ENCODE measurements at regions of chr2 and their contacts with region 1.

Region 1: DNA sequence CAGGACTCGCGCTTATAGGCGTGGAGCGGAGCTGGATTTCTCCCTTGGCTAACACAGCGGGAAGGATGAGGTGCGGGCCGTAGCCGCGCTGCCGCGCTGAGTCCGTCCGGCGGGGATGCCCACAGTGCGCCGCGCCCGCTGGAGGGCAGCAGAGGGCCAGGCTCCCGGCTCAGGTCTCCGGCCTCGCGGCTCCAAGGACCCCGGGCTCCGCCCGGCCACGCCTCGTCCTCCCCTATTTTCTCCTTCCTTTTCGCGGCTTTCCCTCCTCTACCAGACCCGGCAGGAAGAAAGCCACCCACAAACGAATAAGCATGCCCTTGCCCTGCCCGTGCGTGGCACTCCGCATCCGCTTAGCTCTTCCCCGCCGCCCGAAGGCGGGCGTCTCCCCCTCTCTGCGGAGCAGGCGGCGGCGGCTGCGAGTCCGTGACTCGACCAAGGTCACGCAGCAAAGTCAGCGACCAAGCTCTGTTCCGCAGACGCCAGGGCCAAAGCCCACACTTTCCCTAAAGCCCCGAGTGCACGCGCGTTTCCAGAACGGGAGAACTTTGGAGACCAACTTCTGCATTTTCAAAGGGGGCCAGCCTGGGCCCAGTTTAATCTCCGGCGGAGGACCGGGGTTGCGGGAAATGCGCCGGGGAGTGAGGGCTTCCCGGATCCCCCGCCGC is 48.6 kb downstream of the KCNIP3 start:
- DNase-seq: peak; percentile 92
- H3K4me3 ChIP-seq: peak overlapping the region; percentile 41 to 81 (median 74)
- H3K27ac ChIP-seq: peak overlapping the region; percentile 82 to 89 (median 85)
- H3K4me1 ChIP-seq: peaks cover 0 to 25% (median 18%) of the 10 kb centered on the region in 4 donors
- H3K27me3 ChIP-seq: peaks cover 0 to 5% (median 0%) of the 10 kb centered on the region in 3 donors
- CTCF ChIP-seq: peak; percentile 63 to 92 (median 76)
- EP300 ChIP-seq: no peak
- POLR2A ChIP-seq: no peak

Region 2: GRCh38 chr2:95121407-95122196 is 224.1 kb before region 1 on chr2 and contains the start of gene MRPS5:
- intact Hi-C with region 1: no loop called
- DNase-seq: peak; percentile 87
- H3K4me3 ChIP-seq: peak within 1 kb of the TSS; percentile 75 to 94 (median 84)
- H3K27ac ChIP-seq: peak within 1 kb of the TSS; percentile 89 to 95 (median 92)
- H3K4me1 ChIP-seq: peaks cover 0 to 35% (median 26%) of the 10 kb centered on the region in 4 donors
- H3K27me3 ChIP-seq: no peaks in the 10 kb centered on the region
- CTCF ChIP-seq: no peak
- EP300 ChIP-seq: no peak
- POLR2A ChIP-seq: no peak
- total RNA-seq, gene MRPS5: 43.5 to 77.3 (median 48.3) TPM

Region 3: GRCh38 chr2:95207111-95207961 is 138.4 kb before region 1 on chr2 and contains the start of gene ZNF892:
- intact Hi-C with region 1: loop called (anchors 5 kb)
- DNase-seq: peak; percentile 95
- H3K4me3 ChIP-seq: peak within 1 kb of the TSS; percentile 65 to 77 (median 74)
- H3K27ac ChIP-seq: peak within 1 kb of the TSS; percentile 81 to 91 (median 90)
- H3K4me1 ChIP-seq: peaks cover 0 to 22% (median 15%) of the 10 kb centered on the region in 4 donors
- H3K27me3 ChIP-seq: no peaks in the 10 kb centered on the region
- CTCF ChIP-seq: peak in 1 of 4 experiments; percentile 41
- EP300 ChIP-seq: no peak
- POLR2A ChIP-seq: peak; percentile 48 to 58
- total RNA-seq, gene ZNF892: 6.4 to 9.9 (median 8.6) TPM

Region 4: DNA sequence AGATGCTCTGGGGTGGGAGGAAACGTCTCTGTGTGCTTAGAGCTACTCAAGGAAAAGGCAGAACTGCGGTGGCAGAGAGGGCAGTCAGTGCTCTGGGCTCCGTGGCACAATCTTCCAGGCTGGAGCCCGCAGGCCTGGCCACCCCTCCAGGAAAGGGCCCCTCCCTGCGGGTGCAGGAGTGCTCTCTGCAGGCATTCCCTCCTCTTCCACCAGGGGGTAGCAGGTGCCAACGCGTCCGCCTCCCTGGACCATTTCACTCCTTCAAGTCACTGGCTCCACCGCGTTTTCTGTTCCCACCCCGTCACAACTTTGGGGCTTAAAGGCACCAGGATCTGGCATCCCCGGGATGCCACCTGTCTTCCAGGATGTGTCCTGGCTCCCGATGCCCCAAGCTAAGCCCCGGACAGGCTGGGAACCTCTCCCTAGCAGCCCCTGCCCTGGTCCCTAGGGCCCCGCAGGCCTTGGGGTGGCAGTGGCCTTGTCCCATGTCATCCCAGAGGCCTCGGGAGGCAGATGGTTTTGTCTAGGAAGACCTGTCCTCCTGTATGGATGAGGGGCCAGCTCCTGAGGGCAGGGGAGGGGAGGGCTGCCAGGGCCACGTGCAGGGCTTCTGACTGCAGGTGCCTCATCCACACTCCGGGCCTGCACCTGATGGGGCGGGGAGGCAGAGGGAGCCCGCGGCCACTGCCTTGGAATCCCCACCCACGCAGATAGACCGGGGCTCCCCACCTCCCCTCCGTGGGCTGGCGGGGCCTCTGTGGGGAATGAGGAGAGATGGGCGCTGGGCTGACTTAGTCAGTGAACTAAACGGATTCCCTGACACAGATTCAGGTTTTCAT is 22.1 kb before region 1 on chr2:
- intact Hi-C with region 1: loop called (anchors 2 kb)
- DNase-seq: no peak
- H3K4me3 ChIP-seq: no peak overlapping the region
- H3K27ac ChIP-seq: no peak overlapping the region
- H3K4me1 ChIP-seq: no peaks in the 10 kb centered on the region
- H3K27me3 ChIP-seq: no peaks in the 10 kb centered on the region
- CTCF ChIP-seq: peak in 3 of 4 experiments; percentile 23 to 44 (median 30)
- EP300 ChIP-seq: no peak
- POLR2A ChIP-seq: no peak

Region 5: GRCh38 chr2:95389245-95390119 is 43.8 kb after region 1 on chr2:
- intact Hi-C with region 1: loop called (anchors 5 kb)
- DNase-seq: peak; percentile 81
- H3K4me3 ChIP-seq: no peak overlapping the region
- H3K27ac ChIP-seq: no peak overlapping the region
- H3K4me1 ChIP-seq: peaks cover 0 to 8% (median 6%) of the 10 kb centered on the region in 4 donors
- H3K27me3 ChIP-seq: peaks cover 0 to 7% (median 0%) of the 10 kb centered on the region in 3 donors
- CTCF ChIP-seq: peak; percentile 48 to 94 (median 64)
- EP300 ChIP-seq: no peak
- POLR2A ChIP-seq: no peak

Region 6: DNA sequence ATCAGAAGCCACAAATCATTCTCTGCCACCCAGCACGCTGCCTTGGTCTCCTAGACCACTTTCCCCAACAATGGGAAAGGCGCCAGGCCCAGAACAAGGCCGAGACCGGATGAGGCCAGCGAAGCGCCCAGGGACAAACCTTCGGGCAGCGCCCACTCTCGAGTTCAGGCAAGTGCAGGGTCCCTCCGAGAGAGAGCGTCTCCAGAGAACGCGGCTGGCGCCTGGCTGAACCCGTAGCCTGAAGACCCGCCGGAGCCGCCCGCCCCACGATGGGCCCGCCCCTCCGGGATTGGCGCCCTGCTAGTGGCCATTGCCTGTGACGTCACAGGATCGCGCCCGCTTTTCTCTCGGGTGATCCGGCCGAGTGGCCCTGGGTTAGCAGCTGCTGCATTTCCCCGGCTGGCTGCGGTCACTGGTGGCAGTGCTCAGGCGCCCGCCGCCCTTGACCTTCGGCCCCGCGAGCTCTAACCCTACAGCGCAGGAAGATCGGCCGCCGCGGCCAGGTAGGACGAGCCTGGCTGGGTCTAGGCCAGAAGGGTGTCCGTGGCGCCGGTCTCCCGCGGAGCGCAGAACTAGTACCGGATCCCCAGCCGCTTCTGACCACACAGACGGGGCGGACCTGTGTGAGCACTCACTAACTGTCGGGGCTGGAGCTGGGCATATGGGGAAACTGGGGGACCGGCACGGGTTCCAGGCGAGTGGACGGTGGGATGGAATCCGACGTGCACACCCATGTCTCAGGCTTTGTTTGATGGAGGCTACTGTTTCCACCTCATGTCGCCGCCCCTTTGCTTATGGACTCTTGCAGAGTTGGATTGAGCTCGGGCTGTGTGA is 56.9 kb after region 1 on chr2 and contains the start of gene FAHD2A:
- intact Hi-C with region 1: loop called (anchors 5 kb)
- DNase-seq: peak; percentile 98
- H3K4me3 ChIP-seq: peak within 1 kb of the TSS; percentile 73 to 98 (median 92)
- H3K27ac ChIP-seq: peak within 1 kb of the TSS; percentile 82 to 92 (median 89)
- H3K4me1 ChIP-seq: peaks cover 0 to 27% (median 20%) of the 10 kb centered on the region in 4 donors
- H3K27me3 ChIP-seq: no peaks in the 10 kb centered on the region
- CTCF ChIP-seq: no peak
- EP300 ChIP-seq: peak in 1 of 4 donors; percentile 12
- POLR2A ChIP-seq: peak; percentile 61 to 75
- total RNA-seq, gene FAHD2A: 8.9 to 19.4 (median 11.8) TPM